ENCODE measurements at regions of chr20 and their contacts with region 1.

Region 1: GRCh38 chr20:62010551-62011402 is 54.9 kb downstream of the TAF4 start:
- DNase-seq: no peak
- H3K4me3 ChIP-seq: no peak overlapping the region
- CTCF ChIP-seq: peak; percentile 44

Region 2: GRCh38 chr20:62025832-62026563 is 15.2 kb after region 1 on chr20:
- CTCF ChIA-PET with region 1: interaction called, 29 read pairs
- POLR2A ChIA-PET with region 1: no interaction called
- DNase-seq: peak; percentile 26
- H3K4me3 ChIP-seq: no peak overlapping the region
- CTCF ChIP-seq: peak; percentile 78

Region 3: GRCh38 chr20:62143118-62143973 is 132.6 kb after region 1 on chr20 and contains the starts of genes PSMA7 and SS18L1:
- CTCF ChIA-PET with region 1: interaction called, 134 read pairs
- POLR2A ChIA-PET with region 1: no interaction called
- DNase-seq: no peak
- H3K4me3 ChIP-seq: peak within 1 kb of the TSS; percentile 76
- CTCF ChIP-seq: no peak

Region 4: GRCh38 chr20:62258499-62259293 is 247.9 kb after region 1 on chr20:
- CTCF ChIA-PET with region 1: interaction called, 15 read pairs
- POLR2A ChIA-PET with region 1: no interaction called
- DNase-seq: peak; percentile 47
- H3K4me3 ChIP-seq: no peak overlapping the region
- CTCF ChIP-seq: no peak

Region 5: GRCh38 chr20:62382306-62383198 is 371.8 kb after region 1 on chr20:
- CTCF ChIA-PET with region 1: interaction called, 22 read pairs
- POLR2A ChIA-PET with region 1: no interaction called
- DNase-seq: no peak
- H3K4me3 ChIP-seq: no peak overlapping the region
- CTCF ChIP-seq: peak; percentile 96

Region 6: GRCh38 chr20:63005862-63006539 is 995.2 kb after region 1 on chr20:
- CTCF ChIA-PET with region 1: no interaction called
- POLR2A ChIA-PET with region 1: no interaction called
- DNase-seq: no peak
- H3K4me3 ChIP-seq: no peak overlapping the region
- CTCF ChIP-seq: no peak

Measured in AG04449 (cell line).